Activated B cell treated with CpG ODN at 0.5 μM for 24 hours (primary cell): ENCODE measurements at regions of chr2 and their contacts with region 1.

Region 1: DNA sequence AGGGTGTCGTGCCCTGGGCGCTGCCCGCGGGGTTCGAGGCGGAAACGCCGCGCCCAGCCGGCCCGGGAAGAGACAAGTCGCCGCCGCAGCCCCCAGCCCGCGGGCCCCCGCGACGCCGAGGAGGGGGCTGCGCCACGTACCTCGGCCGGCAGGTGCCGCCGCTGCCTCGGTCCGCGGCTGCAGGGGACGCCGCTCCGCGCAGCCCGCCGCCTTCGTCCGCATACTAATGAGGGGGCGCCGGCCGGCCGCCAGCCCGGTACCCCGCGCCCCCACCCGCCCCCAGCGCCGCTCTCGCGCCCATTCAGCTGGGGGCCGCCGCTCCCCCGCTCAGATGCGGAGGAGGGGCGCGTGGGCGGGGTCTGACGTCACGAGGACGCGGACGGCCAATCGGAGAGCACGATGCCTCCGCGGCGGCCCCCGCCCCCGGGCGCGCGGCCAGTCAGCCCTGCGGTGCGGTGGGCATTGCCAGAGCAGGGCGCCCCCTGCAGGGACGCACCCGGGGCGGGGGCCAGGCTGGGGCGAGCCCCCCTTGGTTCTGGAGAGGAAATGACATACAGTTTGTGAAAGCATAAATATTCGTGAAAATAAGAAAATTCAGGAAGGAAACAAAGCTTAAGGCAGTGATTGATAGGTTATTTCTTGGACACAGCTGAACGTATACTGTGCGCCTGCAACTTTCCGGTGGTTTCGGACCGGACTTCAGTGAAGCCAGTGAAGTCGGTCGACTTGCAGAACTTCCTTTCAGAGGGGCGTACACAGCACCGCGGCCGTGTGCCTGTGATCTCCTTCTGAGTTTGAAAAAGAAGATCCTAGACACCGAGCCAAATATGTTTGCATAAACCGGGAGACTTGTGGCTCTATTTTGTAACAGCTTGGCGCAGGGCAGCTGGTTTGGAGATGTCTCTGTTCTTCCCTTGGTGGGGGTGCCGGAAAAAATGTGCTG is at the start of gene ST3GAL5:
- DNase-seq: peak; percentile 97
- ATAC-seq: peak; percentile 87
- H3K4me3 Mint-ChIP-seq: peak within 1 kb of the TSS; percentile 97
- H3K27ac Mint-ChIP-seq: peak within 1 kb of the TSS; percentile 96
- H3K4me1 Mint-ChIP-seq: peaks cover 75% of the 10 kb centered on the region
- H3K27me3 Mint-ChIP-seq: no peaks in the 10 kb centered on the region
- CTCF ChIP-seq: peak; percentile 34
- total RNA-seq, gene ST3GAL5: 56.4 and 70.7 TPM in 2 replicates

Region 2: DNA sequence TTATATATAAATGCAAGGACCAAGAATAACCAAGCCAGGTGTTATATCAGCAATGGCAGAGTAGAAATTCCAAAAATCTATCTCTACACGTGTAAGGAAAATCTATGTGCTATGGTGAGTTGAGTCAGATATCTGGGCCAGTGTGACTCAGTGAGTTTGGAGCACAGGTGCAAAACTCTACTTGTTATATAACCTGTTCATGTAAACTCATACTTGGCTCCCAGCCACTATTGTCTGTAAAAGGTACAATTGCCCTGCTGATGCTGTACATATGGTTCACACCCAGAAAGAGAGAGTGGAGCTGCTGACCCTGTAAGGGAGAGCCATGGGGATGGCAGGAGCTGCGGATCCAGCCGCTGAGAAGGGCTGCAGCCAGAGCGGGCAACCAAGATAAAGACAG is 1120.1 kb before region 1 on chr2:
- CTCF ChIA-PET with region 1: no interaction called
- POLR2A ChIA-PET with region 1: no interaction called
- intact Hi-C with region 1: no loop called
- DNase-seq: no peak
- ATAC-seq: no peak
- H3K4me3 Mint-ChIP-seq: no peak overlapping the region
- H3K27ac Mint-ChIP-seq: no peak overlapping the region
- H3K4me1 Mint-ChIP-seq: no peaks in the 10 kb centered on the region
- H3K27me3 Mint-ChIP-seq: no peaks in the 10 kb centered on the region
- CTCF ChIP-seq: no peak

Region 3: GRCh38 chr2:85728883-85729824 is 159.8 kb before region 1 on chr2:
- CTCF ChIA-PET with region 1: no interaction called
- POLR2A ChIA-PET with region 1: no interaction called
- intact Hi-C with region 1: loop called (anchors 1 kb)
- DNase-seq: peak; percentile 76
- ATAC-seq: peak; percentile 94
- H3K4me3 Mint-ChIP-seq: no peak overlapping the region
- H3K27ac Mint-ChIP-seq: peak overlapping the region; percentile 41
- H3K4me1 Mint-ChIP-seq: peaks cover 2% of the 10 kb centered on the region
- H3K27me3 Mint-ChIP-seq: peaks cover 18% of the 10 kb centered on the region
- CTCF ChIP-seq: peak; percentile 32

Region 4: GRCh38 chr2:85838181-85838580 is 50.8 kb before region 1 on chr2:
- CTCF ChIA-PET with region 1: interaction called, 206 read pairs
- POLR2A ChIA-PET with region 1: interaction called, 10 read pairs
- intact Hi-C with region 1: no loop called
- DNase-seq: no peak
- ATAC-seq: no peak
- H3K4me3 Mint-ChIP-seq: no peak overlapping the region
- H3K27ac Mint-ChIP-seq: no peak overlapping the region
- H3K4me1 Mint-ChIP-seq: peaks cover 28% of the 10 kb centered on the region
- H3K27me3 Mint-ChIP-seq: no peaks in the 10 kb centered on the region
- CTCF ChIP-seq: no peak

Region 5: DNA sequence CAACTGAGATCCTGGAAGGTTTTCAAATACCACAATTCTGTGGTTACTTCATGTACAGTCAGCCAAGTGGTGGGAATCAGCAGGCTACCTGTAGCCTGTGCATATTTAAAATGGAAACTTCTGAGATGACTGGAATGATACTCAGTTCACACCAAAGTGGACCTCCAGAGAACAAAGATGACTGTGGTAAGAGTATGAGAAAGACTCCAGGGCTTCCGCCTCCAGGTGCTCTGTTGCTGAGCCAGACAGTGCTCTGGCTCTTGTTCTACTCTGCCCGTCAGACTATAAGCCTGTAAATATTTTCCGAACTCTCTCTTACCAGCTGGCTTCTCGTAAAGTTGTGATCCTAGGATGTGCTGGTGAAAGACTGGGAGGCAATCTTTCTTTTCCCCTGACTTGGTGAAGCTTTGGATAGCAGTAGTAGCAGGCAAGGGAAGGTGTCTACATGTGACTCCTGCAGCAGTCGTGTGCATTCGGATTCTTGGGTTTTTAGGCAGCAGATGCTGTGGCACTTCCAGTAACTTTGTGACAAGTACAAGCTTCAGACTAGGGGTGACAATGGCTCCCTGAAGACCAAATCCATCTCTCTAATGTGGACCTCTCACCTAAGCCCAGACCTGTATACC is 23.3 kb before region 1 on chr2:
- CTCF ChIA-PET with region 1: interaction called, 3 read pairs
- POLR2A ChIA-PET with region 1: interaction called, 10 read pairs
- intact Hi-C with region 1: no loop called
- DNase-seq: no peak
- ATAC-seq: peak; percentile 33
- H3K4me3 Mint-ChIP-seq: no peak overlapping the region
- H3K27ac Mint-ChIP-seq: peak overlapping the region; percentile 54
- H3K4me1 Mint-ChIP-seq: peaks cover 61% of the 10 kb centered on the region
- H3K27me3 Mint-ChIP-seq: no peaks in the 10 kb centered on the region
- CTCF ChIP-seq: no peak

Region 6: DNA sequence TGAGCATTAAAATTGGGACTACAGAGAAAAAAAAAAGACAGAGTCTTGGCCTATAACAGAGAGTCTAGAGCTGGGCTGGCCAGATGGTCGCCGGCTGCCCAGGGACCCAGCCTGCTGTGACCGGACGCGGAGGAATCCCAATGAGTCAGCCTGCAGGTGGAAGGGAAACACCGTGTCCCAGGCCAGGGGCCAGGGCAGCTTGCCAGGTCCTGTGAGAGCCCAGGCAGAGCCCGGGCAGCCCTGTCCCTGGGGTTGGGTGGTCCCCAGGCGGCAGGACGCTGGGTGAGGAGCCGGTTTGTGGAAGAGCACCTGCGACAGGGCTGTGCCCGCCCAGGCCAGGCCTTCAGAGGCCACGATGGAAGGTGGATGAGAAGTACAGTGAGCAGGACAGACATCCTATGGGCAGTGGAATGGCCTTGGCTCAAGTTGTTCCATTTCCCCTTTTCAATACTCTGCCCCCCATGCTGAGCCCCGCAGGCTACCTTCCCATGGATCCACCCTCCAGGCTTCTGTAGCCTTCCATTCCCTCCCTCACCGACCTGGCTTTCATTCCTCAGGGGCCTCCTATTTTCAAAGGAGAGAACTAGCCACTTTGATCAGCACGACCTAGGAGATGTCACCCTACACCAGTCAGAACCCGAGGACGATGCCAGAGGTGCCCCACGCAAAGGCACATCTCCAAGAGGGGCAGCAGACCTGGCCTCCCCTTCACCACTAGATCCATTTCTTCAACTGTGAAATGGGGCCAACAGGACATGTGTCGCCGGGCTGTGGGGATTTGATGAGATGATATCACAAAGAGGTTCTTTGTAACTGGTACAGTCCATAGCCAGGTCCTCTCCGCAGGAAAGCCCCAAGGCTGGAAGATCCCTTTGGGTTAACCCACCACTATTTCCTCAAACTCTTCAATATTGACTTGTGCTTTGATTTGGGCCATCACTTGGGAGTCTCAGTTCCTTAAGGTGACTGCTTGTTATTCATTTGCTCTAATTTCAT is 129.2 kb after region 1 on chr2:
- CTCF ChIA-PET with region 1: interaction called, 5 read pairs
- POLR2A ChIA-PET with region 1: interaction called, 17 read pairs
- intact Hi-C with region 1: loop called (anchors 5 kb)
- DNase-seq: no peak
- ATAC-seq: no peak
- H3K4me3 Mint-ChIP-seq: no peak overlapping the region
- H3K27ac Mint-ChIP-seq: peak overlapping the region; percentile 85
- H3K4me1 Mint-ChIP-seq: peaks cover 67% of the 10 kb centered on the region
- H3K27me3 Mint-ChIP-seq: no peaks in the 10 kb centered on the region
- CTCF ChIP-seq: no peak

Region 7: GRCh38 chr2:86079981-86080911 is 191.3 kb after region 1 on chr2:
- CTCF ChIA-PET with region 1: interaction called, 76 read pairs
- POLR2A ChIA-PET with region 1: interaction called, 15 read pairs
- intact Hi-C with region 1: loop called (anchors 1 kb)
- DNase-seq: peak; percentile 62
- ATAC-seq: peak; percentile 78
- H3K4me3 Mint-ChIP-seq: peak overlapping the region; percentile 28
- H3K27ac Mint-ChIP-seq: peak overlapping the region; percentile 86
- H3K4me1 Mint-ChIP-seq: peaks cover 35% of the 10 kb centered on the region
- H3K27me3 Mint-ChIP-seq: no peaks in the 10 kb centered on the region
- CTCF ChIP-seq: peak; percentile 40